GM12878 (cell line): ENCODE measurements at regions of chr14 and their contacts with region 1.

Region 1: GRCh38 chr14:34012978-34013720 is 62.3 kb upstream of the EGLN3 start:
- DNase-seq: peak; percentile 76
- ATAC-seq: peak; percentile 86
- H3K4me3 ChIP-seq: peak overlapping the region; percentile 41; the same call in 1 of the 2 replicates
- H3K27ac ChIP-seq: peak overlapping the region; percentile 70
- H3K4me1 ChIP-seq: peaks cover 18% of the 10 kb centered on the region
- H3K27me3 ChIP-seq: no peaks in the 10 kb centered on the region
- CTCF ChIP-seq: no peak
- EP300 ChIP-seq: no peak
- POLR2A ChIP-seq: no peak
- RAD21 ChIP-seq: no peak

Region 2: GRCh38 chr14:33634631-33635030 is 378.5 kb before region 1 on chr14:
- CTCF ChIA-PET with region 1: no interaction called
- POLR2A ChIA-PET with region 1: no interaction called
- RAD21 ChIA-PET with region 1: no interaction called
- SMC1A ChIA-PET with region 1: no interaction called
- in situ Hi-C with region 1: no loop called
- intact Hi-C with region 1: no loop called
- DNase-seq: no peak
- ATAC-seq: no peak
- H3K4me3 ChIP-seq: no peak overlapping the region
- H3K27ac ChIP-seq: no peak overlapping the region
- H3K4me1 ChIP-seq: no peaks in the 10 kb centered on the region
- H3K27me3 ChIP-seq: no peaks in the 10 kb centered on the region
- CTCF ChIP-seq: no peak
- EP300 ChIP-seq: no peak
- POLR2A ChIP-seq: no peak
- RAD21 ChIP-seq: no peak

Region 3: GRCh38 chr14:33922125-33922524 is 91.0 kb before region 1 on chr14:
- CTCF ChIA-PET with region 1: no interaction called
- POLR2A ChIA-PET with region 1: no interaction called
- RAD21 ChIA-PET with region 1: no interaction called
- SMC1A ChIA-PET with region 1: no interaction called
- in situ Hi-C with region 1: no loop called
- intact Hi-C with region 1: no loop called
- DNase-seq: no peak
- ATAC-seq: no peak
- H3K4me3 ChIP-seq: no peak overlapping the region
- H3K27ac ChIP-seq: no peak overlapping the region
- H3K4me1 ChIP-seq: no peaks in the 10 kb centered on the region
- H3K27me3 ChIP-seq: no peaks in the 10 kb centered on the region
- CTCF ChIP-seq: no peak
- EP300 ChIP-seq: no peak
- POLR2A ChIP-seq: no peak
- RAD21 ChIP-seq: no peak

Region 4: GRCh38 chr14:33959692-33960151 is 53.4 kb before region 1 on chr14:
- CTCF ChIA-PET with region 1: interaction called, 4 read pairs
- POLR2A ChIA-PET with region 1: interaction called, 13 read pairs
- RAD21 ChIA-PET with region 1: interaction called, 19 read pairs
- SMC1A ChIA-PET with region 1: interaction called, 4 read pairs
- in situ Hi-C with region 1: no loop called
- intact Hi-C with region 1: no loop called
- DNase-seq: no peak
- ATAC-seq: no peak
- H3K4me3 ChIP-seq: no peak overlapping the region
- H3K27ac ChIP-seq: no peak overlapping the region
- H3K4me1 ChIP-seq: peaks cover 15% of the 10 kb centered on the region
- H3K27me3 ChIP-seq: no peaks in the 10 kb centered on the region
- CTCF ChIP-seq: no peak
- EP300 ChIP-seq: no peak
- POLR2A ChIP-seq: no peak
- RAD21 ChIP-seq: no peak

Region 5: GRCh38 chr14:33979613-33980276 is 33.4 kb before region 1 on chr14:
- CTCF ChIA-PET with region 1: interaction called, 4 read pairs
- POLR2A ChIA-PET with region 1: interaction called, 5 read pairs
- RAD21 ChIA-PET with region 1: interaction called, 7 read pairs
- SMC1A ChIA-PET with region 1: interaction called, 47 read pairs
- in situ Hi-C with region 1: no loop called
- intact Hi-C with region 1: loop called (anchors 5 kb)
- DNase-seq: peak; percentile 43
- ATAC-seq: peak; percentile 78
- H3K4me3 ChIP-seq: no peak overlapping the region
- H3K27ac ChIP-seq: no peak overlapping the region
- H3K4me1 ChIP-seq: no peaks in the 10 kb centered on the region
- H3K27me3 ChIP-seq: no peaks in the 10 kb centered on the region
- CTCF ChIP-seq: no peak
- EP300 ChIP-seq: peak; percentile 39 to 68; a peak in 2 of 4 replicates
- POLR2A ChIP-seq: no peak
- RAD21 ChIP-seq: no peak

Region 6: GRCh38 chr14:34023824-34024767 is 10.9 kb after region 1 on chr14:
- CTCF ChIA-PET with region 1: no interaction called
- POLR2A ChIA-PET with region 1: no interaction called
- RAD21 ChIA-PET with region 1: interaction called, 3 read pairs
- SMC1A ChIA-PET with region 1: interaction called, 10 read pairs
- in situ Hi-C with region 1: no loop called
- intact Hi-C with region 1: no loop called
- DNase-seq: no peak
- ATAC-seq: no peak
- H3K4me3 ChIP-seq: no peak overlapping the region
- H3K27ac ChIP-seq: no peak overlapping the region
- H3K4me1 ChIP-seq: no peaks in the 10 kb centered on the region; the same call in 1 of the 2 replicates
- H3K27me3 ChIP-seq: no peaks in the 10 kb centered on the region
- CTCF ChIP-seq: no peak
- EP300 ChIP-seq: no peak
- POLR2A ChIP-seq: no peak
- RAD21 ChIP-seq: no peak

Region 7: GRCh38 chr14:34051966-34052657 is 39.0 kb after region 1 on chr14:
- CTCF ChIA-PET with region 1: interaction called, 10 read pairs
- POLR2A ChIA-PET with region 1: interaction called, 7 read pairs
- RAD21 ChIA-PET with region 1: interaction called, 16 read pairs
- SMC1A ChIA-PET with region 1: interaction called, 56 read pairs
- in situ Hi-C with region 1: no loop called
- intact Hi-C with region 1: loop called (anchors 5 kb)
- DNase-seq: peak; percentile 76
- ATAC-seq: peak; percentile 78
- H3K4me3 ChIP-seq: no peak overlapping the region
- H3K27ac ChIP-seq: no peak overlapping the region
- H3K4me1 ChIP-seq: peaks cover 28% of the 10 kb centered on the region
- H3K27me3 ChIP-seq: no peaks in the 10 kb centered on the region
- CTCF ChIP-seq: no peak
- EP300 ChIP-seq: peak in 1 of 2 experiments; percentile 49; a peak in 1 of 4 replicates
- POLR2A ChIP-seq: no peak
- RAD21 ChIP-seq: no peak